CD8-positive, alpha-beta memory T cell (primary cell): ENCODE measurements at regions of chr2 and their contacts with region 1.

Region 1: GRCh38 chr2:144449028-144449406 is 70.9 kb downstream of the ZEB2 start:
- DNase-seq: peak in 1 of 5 donors; percentile 24
- H3K4me3 ChIP-seq: peak overlapping the region; percentile 1
- H3K4me3 Mint-ChIP-seq: peak overlapping the region; percentile 8 to 89 (median 76)
- H3K27ac ChIP-seq: peak overlapping the region; percentile 10
- H3K27ac Mint-ChIP-seq: peak overlapping the region in 7 of 8 donors; percentile 21 to 95 (median 68)
- H3K4me1 ChIP-seq: peaks cover 11% of the 10 kb centered on the region
- H3K4me1 Mint-ChIP-seq: peaks cover 40 to 52% (median 50%) of the 10 kb centered on the region in 3 donors
- H3K27me3 ChIP-seq: no peaks in the 10 kb centered on the region
- H3K27me3 Mint-ChIP-seq: peaks cover 0 to 2% of the 10 kb centered on the region in 2 donors

Region 2: DNA sequence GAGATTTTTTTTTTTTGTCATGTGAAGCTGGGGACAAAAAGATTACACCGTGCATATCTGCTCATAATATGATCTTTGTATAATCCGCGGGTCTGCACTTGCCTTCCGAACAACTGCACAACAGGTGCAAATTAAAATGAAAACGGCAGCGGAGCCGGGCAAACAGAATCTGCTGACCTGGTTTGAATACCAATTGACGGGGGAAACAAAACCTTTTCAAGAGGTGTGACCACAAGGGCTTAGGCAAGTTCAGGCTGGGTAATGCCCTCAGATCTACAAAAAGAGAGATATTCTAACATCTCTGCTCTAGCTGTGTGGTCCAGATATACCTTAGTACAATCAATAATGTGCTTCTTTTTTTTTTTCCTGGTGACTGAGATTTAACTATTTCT is 17.6 kb before region 1 on chr2:
- CTCF ChIA-PET with region 1: no interaction called
- POLR2A ChIA-PET with region 1: interaction called, 12 read pairs
- DNase-seq: peak in 1 of 5 donors; percentile 29
- H3K4me3 ChIP-seq: no peak overlapping the region
- H3K4me3 Mint-ChIP-seq: no peak overlapping the region
- H3K27ac ChIP-seq: peak overlapping the region; percentile 30
- H3K27ac Mint-ChIP-seq: no peak overlapping the region
- H3K4me1 ChIP-seq: no peaks in the 10 kb centered on the region
- H3K4me1 Mint-ChIP-seq: peaks cover 5 to 25% (median 25%) of the 10 kb centered on the region in 3 donors
- H3K27me3 ChIP-seq: no peaks in the 10 kb centered on the region
- H3K27me3 Mint-ChIP-seq: no peaks in the 10 kb centered on the region